ENCODE measurements at regions of chr9 and their contacts with region 1.

Region 1: DNA sequence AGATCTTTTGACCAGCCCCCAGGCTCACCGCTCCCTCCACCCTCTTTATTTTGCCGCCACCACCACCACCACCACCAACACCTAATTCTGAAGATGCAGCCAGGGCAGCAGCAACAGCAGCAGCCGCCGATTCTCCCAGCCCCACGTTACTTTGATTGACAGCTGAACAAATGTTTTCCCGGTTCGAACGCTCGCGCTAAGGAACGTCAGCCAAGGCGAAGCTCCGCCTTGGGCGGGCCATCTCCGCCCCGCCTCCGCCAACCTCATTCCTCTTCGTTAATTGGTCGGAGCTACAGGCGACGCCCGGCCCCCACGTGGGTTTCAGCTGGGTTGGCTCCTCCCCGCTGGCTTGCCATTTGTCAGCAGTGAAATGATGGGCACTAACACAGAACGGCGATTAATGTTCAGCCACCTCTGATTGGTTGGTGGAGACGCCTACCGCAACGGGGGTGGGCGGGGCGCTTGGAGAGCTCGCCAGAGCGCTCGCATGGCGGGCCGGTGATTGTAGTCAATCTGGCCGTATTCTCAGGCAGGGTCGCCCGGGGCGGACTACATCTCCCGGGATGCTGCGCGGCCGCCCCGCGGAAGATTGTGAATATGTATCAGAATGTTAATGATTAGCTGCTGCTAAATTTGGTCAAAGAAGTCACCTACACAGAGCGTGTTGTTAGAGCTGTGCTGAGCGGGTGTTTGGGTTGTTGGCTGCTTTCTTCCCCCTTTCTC is at the start of gene TLE4:
- DNase-seq: peak; percentile 100
- H3K4me3 ChIP-seq: peak within 1 kb of the TSS; percentile 96
- H3K27ac ChIP-seq: peak within 1 kb of the TSS; percentile 88 to 96
- H3K4me1 ChIP-seq: peaks cover 0 to 17% of the 10 kb centered on the region in 2 donors
- H3K27me3 ChIP-seq: no peaks in the 10 kb centered on the region
- CTCF ChIP-seq: no peak
- total RNA-seq, gene TLE4: 58.0 TPM

Region 2: DNA sequence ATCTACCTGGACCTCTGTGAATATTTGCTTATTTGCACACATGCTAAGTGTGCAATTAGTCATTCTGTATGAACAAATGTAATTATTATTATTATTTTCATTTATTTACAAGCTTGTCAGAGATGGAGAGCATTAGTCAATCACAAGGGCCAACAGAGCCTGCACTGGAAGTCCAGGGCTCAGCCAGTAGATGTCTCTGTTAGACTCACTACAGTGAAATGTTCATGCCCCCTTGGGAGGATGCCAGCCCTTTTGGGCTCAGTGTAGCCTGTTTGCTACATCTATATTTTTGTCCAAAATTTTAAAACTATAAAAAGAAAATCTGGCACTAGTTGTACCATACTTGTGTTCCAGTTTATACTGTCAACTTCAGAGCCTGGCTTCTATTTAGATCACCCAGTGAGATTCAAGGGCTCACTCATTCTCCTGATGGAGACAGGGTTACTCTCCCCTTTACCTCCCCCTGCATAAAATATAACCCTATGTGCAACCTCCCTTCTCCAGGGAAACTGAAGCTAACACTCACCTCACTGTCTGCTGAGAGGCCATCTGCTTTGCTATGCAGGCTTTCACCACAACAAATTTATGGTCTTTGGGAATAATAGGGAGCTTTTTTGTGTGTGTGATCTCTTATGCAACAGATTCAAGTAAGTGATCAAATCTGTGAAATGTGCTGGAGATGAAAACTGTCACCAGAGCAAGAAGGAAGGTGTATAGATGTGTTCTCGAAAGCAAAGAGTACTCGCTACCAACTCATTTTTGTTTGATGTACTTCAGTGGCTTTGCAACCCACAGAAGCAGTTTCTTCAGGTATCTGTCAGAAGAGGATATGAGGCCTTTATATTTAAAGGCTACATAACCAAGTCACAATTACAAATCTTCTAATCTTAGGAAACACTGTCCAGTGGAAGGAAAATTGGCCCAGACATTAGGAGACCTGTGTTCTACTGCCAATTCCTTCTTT is 99.6 kb before region 1 on chr9:
- intact Hi-C with region 1: no loop called
- DNase-seq: peak; percentile 8 to 75
- H3K4me3 ChIP-seq: no peak overlapping the region
- H3K27ac ChIP-seq: no peak overlapping the region
- H3K4me1 ChIP-seq: peaks cover 0 to 3% of the 10 kb centered on the region in 2 donors
- H3K27me3 ChIP-seq: no peaks in the 10 kb centered on the region
- CTCF ChIP-seq: peak in 2 of 3 experiments; percentile 26 to 48

Region 3: DNA sequence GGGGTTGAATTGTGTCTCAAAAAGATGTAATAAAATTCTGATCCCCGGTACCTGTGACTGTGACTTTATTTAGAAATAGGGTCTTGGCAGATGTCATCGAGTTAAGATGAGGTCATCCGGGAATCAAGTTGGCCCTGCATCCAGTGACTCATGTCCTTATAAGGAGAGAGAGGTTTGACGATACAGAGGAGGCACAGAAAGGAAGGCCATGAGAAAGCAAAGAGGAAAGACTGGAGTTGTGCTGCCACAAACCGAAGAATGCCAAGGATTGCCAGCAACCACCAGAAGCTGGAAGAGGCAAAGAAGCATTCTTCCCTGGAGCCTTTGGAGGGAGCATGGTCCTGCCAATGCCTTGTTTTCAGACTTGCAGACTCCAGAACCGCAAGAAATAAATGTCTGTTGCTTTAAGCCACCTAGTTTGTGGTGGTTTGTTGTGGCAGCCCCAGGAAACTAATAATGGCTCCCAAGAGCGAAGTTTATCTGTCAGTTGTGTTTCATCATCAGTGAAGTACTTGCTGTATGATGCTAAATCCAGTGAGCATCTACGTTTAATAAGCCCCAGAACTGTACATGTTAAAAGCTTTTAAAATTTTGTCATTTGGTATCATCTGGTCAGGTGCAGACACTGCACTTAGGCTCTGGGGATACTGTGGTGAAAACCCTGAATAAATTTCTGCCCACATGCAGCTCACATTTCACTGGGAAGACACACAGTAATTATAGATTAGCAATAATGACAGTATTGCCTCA is 115.1 kb after region 1 on chr9:
- intact Hi-C with region 1: loop called (anchors 2 kb)
- DNase-seq: peak in 1 of 2 donors; percentile 78
- H3K4me3 ChIP-seq: peak overlapping the region in 1 of 2 donors; percentile 41
- H3K27ac ChIP-seq: peak overlapping the region; percentile 50 to 64
- H3K4me1 ChIP-seq: peaks cover 0 to 13% of the 10 kb centered on the region in 2 donors
- H3K27me3 ChIP-seq: no peaks in the 10 kb centered on the region
- CTCF ChIP-seq: no peak